CD4-positive, alpha-beta memory T cell (primary cell): ENCODE measurements at regions of chr11 and their contacts with region 1.

Region 1: GRCh38 chr11:63635762-63636465 is 21.7 kb upstream of the PLAAT3 start:
- DNase-seq: peak; percentile 56 to 69 (median 66)
- H3K4me3 ChIP-seq: no peak overlapping the region
- H3K4me3 Mint-ChIP-seq: no peak overlapping the region
- H3K27ac ChIP-seq: no peak overlapping the region
- H3K27ac Mint-ChIP-seq: peak overlapping the region in 1 of 7 donors; percentile 7
- H3K4me1 ChIP-seq: no peaks in the 10 kb centered on the region
- H3K4me1 Mint-ChIP-seq: peaks cover 10 to 14% (median 10%) of the 10 kb centered on the region in 4 donors
- H3K27me3 ChIP-seq: no peaks in the 10 kb centered on the region
- H3K27me3 Mint-ChIP-seq: no peaks in the 10 kb centered on the region

Region 2: GRCh38 chr11:63032457-63032856 is 603.5 kb before region 1 on chr11:
- CTCF ChIA-PET with region 1: interaction called, 4 read pairs
- POLR2A ChIA-PET with region 1: no interaction called
- intact Hi-C with region 1: loop called (anchors 1 kb)
- DNase-seq: no peak
- H3K4me3 ChIP-seq: no peak overlapping the region
- H3K4me3 Mint-ChIP-seq: no peak overlapping the region
- H3K27ac ChIP-seq: no peak overlapping the region
- H3K27ac Mint-ChIP-seq: no peak overlapping the region
- H3K4me1 ChIP-seq: no peaks in the 10 kb centered on the region
- H3K4me1 Mint-ChIP-seq: peaks cover 0 to 5% (median 3%) of the 10 kb centered on the region in 4 donors
- H3K27me3 ChIP-seq: no peaks in the 10 kb centered on the region
- H3K27me3 Mint-ChIP-seq: peaks cover 12 to 42% of the 10 kb centered on the region in 2 donors

Region 3: GRCh38 chr11:63671322-63672155 is 35.6 kb after region 1 on chr11 and contains the start of gene ATL3:
- CTCF ChIA-PET with region 1: interaction called, 15 read pairs
- POLR2A ChIA-PET with region 1: interaction called, 3 read pairs
- intact Hi-C with region 1: no loop called
- DNase-seq: peak; percentile 91 to 94 (median 92)
- H3K4me3 ChIP-seq: peak within 1 kb of the TSS; percentile 55 to 91
- H3K4me3 Mint-ChIP-seq: peak within 1 kb of the TSS; percentile 83 to 91 (median 86)
- H3K27ac ChIP-seq: peak within 1 kb of the TSS; percentile 79
- H3K27ac Mint-ChIP-seq: peak within 1 kb of the TSS; percentile 77 to 93 (median 87)
- H3K4me1 ChIP-seq: peaks cover 43% of the 10 kb centered on the region
- H3K4me1 Mint-ChIP-seq: peaks cover 20 to 41% (median 26%) of the 10 kb centered on the region in 4 donors
- H3K27me3 ChIP-seq: no peaks in the 10 kb centered on the region
- H3K27me3 Mint-ChIP-seq: no peaks in the 10 kb centered on the region
- total RNA-seq, gene ATL3: 40.4 to 43.3 TPM